Pancreas (tissue), 10 donors: ENCODE measurements at regions of chr17 and their contacts with region 1.

Region 1: GRCh38 chr17:8253800-8254199 is 4.7 kb downstream of the PFAS start:
- DNase-seq: peak in 4 of 6 donors; percentile 21 to 77 (median 50)
- ATAC-seq: peak in 3 of 4 donors; percentile 50 to 68 (median 52)
- H3K4me3 ChIP-seq: no peak overlapping the region
- H3K27ac ChIP-seq: no peak overlapping the region
- H3K4me1 ChIP-seq: no peaks in the 10 kb centered on the region
- H3K27me3 ChIP-seq: no peaks in the 10 kb centered on the region
- CTCF ChIP-seq: peak in 2 of 4 donors; percentile 33

Region 2: DNA sequence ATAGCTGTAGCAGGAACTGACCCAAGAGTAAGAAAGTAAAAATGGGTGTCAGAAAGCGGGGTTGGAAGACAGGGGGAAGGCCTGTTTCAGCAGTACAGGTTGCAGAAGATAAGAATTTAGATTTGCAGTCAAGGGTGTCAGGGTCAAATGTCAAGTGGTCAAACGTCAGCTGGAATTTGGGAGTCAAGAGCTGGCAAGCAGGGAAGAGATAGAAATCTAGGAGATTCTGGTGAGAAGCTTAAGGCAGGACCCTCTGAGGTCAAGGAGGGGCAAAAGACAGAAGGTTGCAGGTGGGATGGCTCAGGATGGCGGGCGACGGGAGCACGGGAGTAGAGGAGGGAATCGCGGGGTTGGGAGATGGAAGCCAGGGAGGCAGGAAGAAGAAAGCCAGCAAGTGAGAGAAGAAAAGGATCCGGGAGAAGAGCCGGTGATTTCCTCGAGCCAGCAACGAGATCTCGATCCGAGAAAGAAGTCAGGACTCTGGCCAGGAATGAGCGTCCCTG is 41.1 kb after region 1 on chr17:
- intact Hi-C with region 1: loop called in 2 of 3 experiments (anchors 5 to 10 kb)
- DNase-seq: peak in 2 of 6 donors; percentile 6 to 33
- ATAC-seq: peak; percentile 11 to 23 (median 14)
- H3K4me3 ChIP-seq: peak overlapping the region; percentile 49 to 85 (median 59)
- H3K27ac ChIP-seq: peak overlapping the region; percentile 73 to 87 (median 80)
- H3K4me1 ChIP-seq: peaks cover 0 to 8% (median 4%) of the 10 kb centered on the region in 3 donors
- H3K27me3 ChIP-seq: no peaks in the 10 kb centered on the region
- CTCF ChIP-seq: no peak

Region 3: GRCh38 chr17:8300627-8301242 is 46.9 kb after region 1 on chr17:
- intact Hi-C with region 1: loop called in 2 of 3 experiments (anchors 5 to 10 kb)
- DNase-seq: peak; percentile 48 to 80 (median 62)
- ATAC-seq: peak; percentile 94 to 98 (median 98)
- H3K4me3 ChIP-seq: no peak overlapping the region
- H3K27ac ChIP-seq: no peak overlapping the region
- H3K4me1 ChIP-seq: no peaks in the 10 kb centered on the region
- H3K27me3 ChIP-seq: no peaks in the 10 kb centered on the region
- CTCF ChIP-seq: peak; percentile 46 to 83 (median 72)